Mammary epithelial cell (primary cell): ENCODE measurements at regions of chr13 and their contacts with region 1.

Region 1: DNA sequence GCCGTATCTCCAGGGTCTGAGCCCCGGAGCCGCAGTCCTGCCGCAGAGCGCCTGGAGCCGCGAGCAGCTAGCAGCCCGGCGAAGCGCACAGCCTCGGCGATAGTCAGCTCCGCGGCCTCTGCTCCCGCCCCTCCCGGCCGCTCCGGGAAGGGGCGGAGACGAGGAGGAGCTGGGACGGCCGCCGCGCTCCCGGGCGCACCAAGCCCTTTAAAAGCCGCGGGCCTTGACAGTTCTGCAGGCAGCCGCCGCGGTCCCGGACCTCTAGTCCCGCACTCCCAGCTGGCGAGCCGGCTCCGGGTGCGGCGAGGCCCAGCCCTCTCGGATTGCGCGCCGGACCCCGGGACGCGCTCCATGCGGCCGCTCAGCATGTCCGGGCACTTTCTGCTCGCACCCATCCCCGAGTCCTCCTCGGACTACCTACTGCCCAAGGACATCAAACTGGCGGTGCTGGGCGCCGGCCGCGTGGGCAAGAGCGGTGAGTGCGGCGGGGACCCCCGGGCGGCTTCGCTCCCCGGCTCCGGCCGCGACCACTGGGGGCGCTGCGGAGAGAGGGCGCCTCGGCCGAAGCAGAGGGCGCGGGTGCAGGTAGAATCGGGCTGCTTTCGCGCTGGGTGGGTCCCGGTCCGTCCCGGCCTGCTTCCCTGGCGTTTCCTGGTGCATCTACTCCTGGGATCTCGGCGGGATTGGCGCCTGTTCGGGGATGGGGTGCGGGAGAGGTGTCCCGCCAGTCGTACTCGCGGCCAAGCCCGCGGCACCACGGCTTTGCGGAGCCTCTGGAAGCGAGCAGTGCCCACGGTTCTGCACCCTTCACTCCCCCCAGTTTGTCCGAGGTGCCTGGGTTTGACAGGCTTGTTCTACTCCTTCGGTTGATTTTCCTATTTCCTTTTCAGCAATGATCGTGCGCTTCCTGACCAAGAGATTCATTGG is at the start of gene RASL11A:
- DNase-seq: peak; percentile 83
- H3K4me3 ChIP-seq: peak within 1 kb of the TSS; percentile 62 to 73 (median 69)
- H3K27ac ChIP-seq: no peak within 1 kb of the TSS
- H3K4me1 ChIP-seq: peaks cover 7% of the 10 kb centered on the region
- H3K27me3 ChIP-seq: no peaks in the 10 kb centered on the region
- CTCF ChIP-seq: peak; percentile 55 to 77
- total RNA-seq, gene RASL11A: 1.6 to 2.2 TPM

Region 2: DNA sequence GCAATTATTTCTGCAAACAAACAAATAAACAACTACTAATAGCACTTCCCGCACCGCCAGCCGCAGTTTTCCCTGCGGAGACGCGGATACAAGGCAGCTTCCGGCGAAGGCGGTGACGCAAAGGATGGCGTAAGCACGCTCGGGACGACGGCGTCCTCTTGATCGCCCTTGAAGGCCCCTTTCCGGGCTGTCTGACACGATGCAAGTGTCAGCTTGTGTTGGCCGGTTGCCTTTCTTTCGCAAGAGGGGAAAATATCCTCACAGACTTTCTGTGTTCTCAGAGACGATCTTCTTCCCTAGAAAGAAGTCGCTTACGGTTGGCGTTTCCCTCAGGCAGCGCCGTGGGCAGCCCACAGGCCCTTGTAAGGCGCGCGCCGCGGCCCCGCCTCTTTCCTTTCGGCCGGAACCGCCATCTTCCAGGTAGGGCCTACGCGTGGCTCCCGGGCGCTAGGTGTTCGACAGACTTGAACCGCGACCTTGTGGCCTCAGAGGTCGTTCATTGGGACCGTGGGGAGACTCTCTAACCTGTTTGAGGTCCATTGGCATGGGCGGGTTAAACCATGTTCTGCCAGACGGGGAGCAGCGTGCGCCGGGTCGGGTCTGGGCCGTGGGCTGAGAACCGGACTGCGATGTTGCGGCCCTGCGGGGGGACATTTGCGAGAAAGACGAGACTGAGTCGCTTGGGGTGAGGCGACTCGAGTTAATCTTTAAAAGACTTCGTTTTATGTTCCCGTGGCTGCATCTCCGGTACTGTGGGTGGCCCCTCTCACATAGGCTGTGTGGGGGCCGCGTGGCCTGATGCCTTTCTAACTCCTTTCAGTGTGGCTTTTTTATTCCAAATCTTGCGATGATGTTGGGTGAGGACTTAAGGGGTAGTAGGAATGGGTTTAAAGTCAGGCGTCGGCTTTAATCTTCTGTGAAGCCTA is 19.4 kb before region 1 on chr13 and contains the start of gene RPL21:
- CTCF ChIA-PET with region 1: no interaction called
- dilution Hi-C with region 1: no loop called
- in situ Hi-C with region 1: no loop called
- intact Hi-C with region 1: loop called (anchors 1 kb)
- DNase-seq: peak; percentile 88
- H3K4me3 ChIP-seq: peak within 1 kb of the TSS; percentile 77 to 97 (median 84)
- H3K27ac ChIP-seq: peak within 1 kb of the TSS; percentile 94
- H3K4me1 ChIP-seq: peaks cover 9% of the 10 kb centered on the region
- H3K27me3 ChIP-seq: no peaks in the 10 kb centered on the region
- CTCF ChIP-seq: no peak
- total RNA-seq, gene RPL21: 422 to 818 TPM

Region 3: GRCh38 chr13:27349458-27349857 is 78.6 kb after region 1 on chr13:
- CTCF ChIA-PET with region 1: no interaction called
- dilution Hi-C with region 1: no loop called
- in situ Hi-C with region 1: no loop called
- intact Hi-C with region 1: no loop called
- DNase-seq: no peak
- H3K4me3 ChIP-seq: no peak overlapping the region
- H3K27ac ChIP-seq: no peak overlapping the region
- H3K4me1 ChIP-seq: no peaks in the 10 kb centered on the region
- H3K27me3 ChIP-seq: no peaks in the 10 kb centered on the region
- CTCF ChIP-seq: no peak